Activated T-helper 2 cell treated with anti-CD3 and anti-CD28 coated beads, Interferon-gamma antibody, Interleukin-2, Interleukin-4, amounts not matched to agents 10 μg/mL and 5 μg/mL and 100 μg/mL, durations not matched to agents 14 hours and 24 hours and 36 hours (primary cell): ENCODE measurements at regions of chr5 and their contacts with region 1.

Region 1: DNA sequence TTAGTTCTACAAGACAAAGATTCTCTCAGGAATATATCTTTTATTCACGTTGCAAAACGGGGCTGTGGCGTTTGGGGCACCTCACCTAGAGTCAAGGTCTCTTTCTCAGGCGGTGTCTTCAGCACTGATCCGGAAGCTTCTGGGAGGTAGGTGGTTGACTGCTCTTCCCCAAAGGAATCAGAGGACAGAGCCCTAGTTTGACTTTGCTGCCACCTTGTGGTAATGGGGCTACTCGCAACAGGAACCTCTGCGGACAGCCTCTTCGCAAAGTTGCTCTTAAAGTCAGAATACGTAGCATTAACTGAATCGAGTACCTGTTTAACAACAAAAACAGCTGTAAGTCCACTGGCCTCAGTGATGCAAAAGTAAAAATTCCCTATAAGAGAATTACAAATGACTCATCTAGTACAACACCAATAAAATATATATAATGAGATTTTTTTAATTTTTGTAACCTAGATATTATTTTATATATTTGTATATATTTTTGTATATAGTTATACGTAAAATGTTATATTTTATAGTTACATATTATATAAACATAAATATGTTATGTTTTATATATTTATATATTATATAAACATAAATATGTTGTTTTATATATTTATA is 13.3 kb upstream of the GPX8 start:
- DNase-seq: peak; percentile 80
- H3K4me3 Mint-ChIP-seq: peak overlapping the region; percentile 23
- H3K27ac Mint-ChIP-seq: no peak overlapping the region
- H3K4me1 Mint-ChIP-seq: peaks cover 46% of the 10 kb centered on the region
- H3K27me3 Mint-ChIP-seq: peaks cover 23% of the 10 kb centered on the region

Region 2: GRCh38 chr5:54905943-54906537 is 240.6 kb before region 1 on chr5:
- intact Hi-C with region 1: loop called (anchors 1 kb)
- DNase-seq: peak; percentile 50
- H3K4me3 Mint-ChIP-seq: no peak overlapping the region
- H3K27ac Mint-ChIP-seq: no peak overlapping the region
- H3K4me1 Mint-ChIP-seq: peaks cover 65% of the 10 kb centered on the region
- H3K27me3 Mint-ChIP-seq: peaks cover 29% of the 10 kb centered on the region

Region 3: DNA sequence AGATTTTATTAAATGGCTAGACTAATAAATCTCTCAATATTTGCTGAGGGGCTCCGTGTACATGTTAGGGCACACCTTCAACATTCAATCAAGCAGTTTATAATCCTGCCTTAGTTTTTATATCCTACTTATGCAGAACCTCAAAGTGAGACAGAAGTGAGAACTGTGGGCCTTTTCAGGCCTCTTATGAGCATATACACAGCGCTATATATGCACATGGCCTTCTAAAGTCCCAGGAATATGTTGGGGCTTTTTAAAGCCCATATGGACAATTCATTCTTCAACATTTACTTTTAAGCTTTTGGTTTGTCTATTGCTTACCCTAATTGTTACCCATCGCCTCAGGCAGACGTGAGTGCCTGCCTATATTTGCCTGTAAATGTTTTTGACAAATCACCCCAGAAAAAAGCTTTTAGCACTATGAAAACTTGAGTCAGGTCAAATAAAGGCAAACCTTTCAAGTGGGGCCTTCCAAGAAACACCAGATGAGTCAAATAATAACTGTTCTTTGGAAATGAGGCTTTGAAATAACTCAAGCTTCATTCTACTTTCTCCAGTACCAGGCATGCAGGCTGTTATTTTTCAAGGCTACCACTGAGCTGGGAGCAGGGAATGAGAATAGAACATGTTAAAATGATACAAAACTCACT is 219.4 kb before region 1 on chr5:
- intact Hi-C with region 1: loop called (anchors 5 kb)
- DNase-seq: no peak
- H3K4me3 Mint-ChIP-seq: no peak overlapping the region
- H3K27ac Mint-ChIP-seq: peak overlapping the region; percentile 56
- H3K4me1 Mint-ChIP-seq: peaks cover 21% of the 10 kb centered on the region
- H3K27me3 Mint-ChIP-seq: no peaks in the 10 kb centered on the region

Region 4: GRCh38 chr5:54944364-54944763 is 202.3 kb before region 1 on chr5:
- intact Hi-C with region 1: loop called (anchors 1 kb)
- DNase-seq: no peak
- H3K4me3 Mint-ChIP-seq: no peak overlapping the region
- H3K27ac Mint-ChIP-seq: no peak overlapping the region
- H3K4me1 Mint-ChIP-seq: peaks cover 22% of the 10 kb centered on the region
- H3K27me3 Mint-ChIP-seq: no peaks in the 10 kb centered on the region

Region 5: GRCh38 chr5:55134053-55134722 is 12.5 kb before region 1 on chr5:
- intact Hi-C with region 1: loop called (anchors 1 kb)
- DNase-seq: peak; percentile 44
- H3K4me3 Mint-ChIP-seq: no peak overlapping the region
- H3K27ac Mint-ChIP-seq: peak overlapping the region; percentile 39
- H3K4me1 Mint-ChIP-seq: peaks cover 41% of the 10 kb centered on the region
- H3K27me3 Mint-ChIP-seq: peaks cover 2% of the 10 kb centered on the region